H1 (cell line): ENCODE measurements at regions of chr13 and their contacts with region 1.

Region 1: GRCh38 chr13:40777166-40777808 is 6.3 kb upstream of the MRPS31 start:
- DNase-seq: no peak
- H3K4me3 ChIP-seq: peak overlapping the region in 3 of 4 experiments; percentile 7 to 55 (median 13); a peak in 4 of 8 replicates
- H3K27ac ChIP-seq: no peak overlapping the region
- H3K4me1 ChIP-seq: no peaks in the 10 kb centered on the region; a peak in 1 of 7 replicates
- H3K27me3 ChIP-seq: no peaks in the 10 kb centered on the region
- CTCF ChIP-seq: peak; percentile 21 to 66 (median 49)
- EP300 ChIP-seq: no peak
- POLR2A ChIP-seq: no peak
- RAD21 ChIP-seq: peak; percentile 76 to 77

Region 2: DNA sequence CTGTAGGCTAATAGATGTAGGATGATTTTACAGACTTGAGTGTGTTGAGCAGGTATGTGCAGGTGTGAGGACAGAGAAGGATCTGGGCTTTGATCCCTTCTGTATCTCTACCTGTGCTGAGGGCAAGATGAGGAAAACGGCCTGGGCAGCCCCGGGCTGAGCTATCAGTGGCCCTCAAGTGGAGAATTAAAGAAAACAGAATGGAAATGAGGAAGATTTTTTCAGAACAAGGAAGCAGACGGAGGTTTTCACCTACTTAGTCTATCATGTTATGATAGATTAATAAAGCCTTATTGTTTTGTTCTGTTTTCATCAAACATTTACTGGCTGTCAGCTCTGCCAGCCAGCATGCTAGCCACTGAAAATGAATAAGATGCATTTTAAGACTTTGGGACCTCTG is 88.5 kb before region 1 on chr13:
- CTCF ChIA-PET with region 1: interaction called, 10 read pairs
- POLR2A ChIA-PET with region 1: no interaction called
- DNase-seq: no peak
- H3K4me3 ChIP-seq: no peak overlapping the region
- H3K27ac ChIP-seq: no peak overlapping the region
- H3K4me1 ChIP-seq: no peaks in the 10 kb centered on the region
- H3K27me3 ChIP-seq: no peaks in the 10 kb centered on the region
- CTCF ChIP-seq: no peak
- EP300 ChIP-seq: no peak
- POLR2A ChIP-seq: no peak
- RAD21 ChIP-seq: no peak

Region 3: GRCh38 chr13:40697711-40698110 is 79.6 kb before region 1 on chr13:
- CTCF ChIA-PET with region 1: interaction called, 13 read pairs
- POLR2A ChIA-PET with region 1: no interaction called
- DNase-seq: no peak
- H3K4me3 ChIP-seq: no peak overlapping the region
- H3K27ac ChIP-seq: no peak overlapping the region
- H3K4me1 ChIP-seq: no peaks in the 10 kb centered on the region
- H3K27me3 ChIP-seq: no peaks in the 10 kb centered on the region; a peak in 2 of 7 replicates
- CTCF ChIP-seq: no peak
- EP300 ChIP-seq: no peak
- POLR2A ChIP-seq: no peak
- RAD21 ChIP-seq: no peak

Region 4: DNA sequence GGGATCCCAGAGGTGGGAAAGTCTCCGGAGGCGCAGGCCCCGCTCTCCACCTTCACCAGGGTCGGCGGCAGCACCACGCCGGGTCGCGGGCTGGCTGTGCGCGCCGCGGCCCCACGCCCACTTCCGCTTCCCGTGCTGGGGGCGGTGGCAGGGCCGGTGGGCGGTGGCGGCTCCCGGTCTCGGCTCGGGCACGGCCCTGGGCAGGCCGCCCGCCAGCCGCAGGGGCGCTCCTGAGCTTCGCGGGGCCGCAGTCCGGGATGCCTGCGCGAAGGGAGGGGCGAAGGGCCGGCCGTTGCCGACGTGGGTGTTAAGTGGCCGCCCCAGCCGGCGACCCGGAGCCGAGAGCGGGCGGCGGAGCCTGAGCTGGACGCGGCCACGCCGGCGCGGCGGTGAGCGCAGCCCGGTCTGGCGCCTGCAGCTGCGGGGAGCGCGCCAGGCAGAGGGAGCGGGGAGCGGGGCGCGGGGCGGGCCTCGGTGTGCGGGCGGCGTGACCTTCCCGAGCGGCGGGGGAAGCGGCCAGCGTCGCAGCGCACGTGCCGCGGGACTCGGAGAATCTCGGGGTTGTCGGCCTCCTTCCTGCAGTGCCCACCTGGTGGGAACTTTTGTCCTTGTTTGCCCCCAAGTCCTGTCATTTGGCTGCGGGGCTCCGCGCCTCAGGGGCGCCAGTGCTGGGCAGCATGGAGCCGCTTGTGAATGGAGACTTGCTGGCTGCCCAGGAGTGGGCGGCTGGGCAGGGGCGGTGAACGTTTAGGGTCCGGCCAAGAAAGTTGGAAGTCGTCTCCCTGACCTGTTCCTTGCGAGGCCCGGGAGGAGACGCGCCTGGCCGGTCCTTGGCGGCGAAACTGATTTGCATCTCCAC is 12.2 kb after region 1 on chr13 and contains the start of gene SLC25A15:
- CTCF ChIA-PET with region 1: interaction called, 38 read pairs
- POLR2A ChIA-PET with region 1: interaction called, 10 read pairs
- DNase-seq: peak in 1 of 2 experiments; percentile 81
- H3K4me3 ChIP-seq: peak within 1 kb of the TSS; percentile 64 to 74 (median 68)
- H3K27ac ChIP-seq: peak within 1 kb of the TSS; percentile 60; the same call in 1 of the 2 replicates
- H3K4me1 ChIP-seq: peaks cover 0 to 4% (median under 1%) of the 10 kb centered on the region in 4 experiments; a peak in 1 of 7 replicates
- H3K27me3 ChIP-seq: no peaks in the 10 kb centered on the region
- CTCF ChIP-seq: peak in 2 of 3 experiments; percentile 31 to 33; a peak in 3 of 4 replicates
- EP300 ChIP-seq: no peak
- POLR2A ChIP-seq: peak in 1 of 2 experiments; percentile 66; a peak in 2 of 3 replicates
- RAD21 ChIP-seq: peak in 1 of 2 experiments; percentile 30; a peak in 1 of 4 replicates
- total RNA-seq, gene SLC25A15: 22.1 and 23.4 TPM in 2 replicates

Region 5: DNA sequence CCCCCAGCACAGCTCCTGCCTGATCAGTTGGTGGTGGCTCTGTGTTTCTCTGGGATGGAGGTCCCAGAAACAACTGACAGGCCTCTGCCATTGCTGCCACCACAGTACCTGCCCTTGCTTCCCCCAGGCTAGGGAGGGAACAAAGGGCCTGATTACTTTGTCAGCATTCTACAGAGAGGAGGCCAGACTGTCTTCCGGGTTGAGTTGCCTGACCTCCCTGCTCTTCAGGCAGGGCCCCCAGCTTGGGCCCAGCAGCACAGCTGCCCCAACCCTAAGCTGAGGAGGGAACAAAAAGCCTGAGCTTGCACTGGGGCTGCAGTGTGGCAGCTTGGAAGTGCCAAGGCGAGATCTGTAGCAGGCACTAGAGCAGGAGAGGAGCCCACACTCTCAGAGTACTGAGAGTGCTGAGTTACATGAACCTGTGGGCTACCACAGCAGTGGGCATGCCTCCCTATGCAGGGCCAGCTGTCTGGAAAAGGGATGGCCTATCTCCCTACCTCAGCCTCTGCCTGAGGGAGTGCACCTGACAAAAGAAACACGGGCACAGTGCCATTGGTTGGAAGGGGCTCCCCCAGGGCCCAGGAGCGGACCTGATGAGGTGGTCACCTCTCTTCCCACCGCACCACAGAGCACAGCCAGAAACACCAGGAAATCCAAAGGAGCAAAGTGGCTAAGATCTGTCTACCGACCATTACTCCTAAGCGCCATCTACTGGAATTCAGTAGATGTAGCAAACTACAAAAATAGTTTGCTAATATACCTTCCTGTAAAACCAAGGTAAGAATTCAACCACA is 36.6 kb after region 1 on chr13:
- CTCF ChIA-PET with region 1: interaction called, 37 read pairs
- POLR2A ChIA-PET with region 1: no interaction called
- DNase-seq: peak in 1 of 2 experiments; percentile 57
- H3K4me3 ChIP-seq: no peak overlapping the region
- H3K27ac ChIP-seq: no peak overlapping the region
- H3K4me1 ChIP-seq: no peaks in the 10 kb centered on the region
- H3K27me3 ChIP-seq: no peaks in the 10 kb centered on the region
- CTCF ChIP-seq: peak in 2 of 3 experiments; percentile 66 to 74; a peak in 3 of 4 replicates
- EP300 ChIP-seq: no peak
- POLR2A ChIP-seq: no peak
- RAD21 ChIP-seq: peak; percentile 53 to 71

Region 6: DNA sequence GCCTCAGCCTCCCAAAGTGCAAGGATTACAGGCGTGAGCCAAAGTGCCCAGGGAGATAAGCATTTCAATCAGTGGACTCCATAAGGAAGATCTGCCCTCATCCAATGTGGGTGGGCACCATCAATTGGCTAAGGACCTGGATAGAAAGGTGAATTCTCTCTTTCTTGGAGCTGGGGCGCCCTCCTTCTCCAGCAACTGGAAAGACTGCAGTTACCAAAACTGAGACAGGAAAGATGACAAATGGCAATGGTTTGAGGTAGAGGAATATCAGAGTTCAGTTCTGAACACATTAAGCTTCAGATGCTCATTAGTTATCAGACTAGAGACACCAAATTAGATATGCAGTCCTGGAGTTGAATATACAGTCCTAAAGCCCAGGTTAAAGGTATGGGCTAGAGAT is 252.3 kb after region 1 on chr13:
- CTCF ChIA-PET with region 1: interaction called, 10 read pairs
- POLR2A ChIA-PET with region 1: no interaction called
- DNase-seq: no peak
- H3K4me3 ChIP-seq: no peak overlapping the region
- H3K27ac ChIP-seq: no peak overlapping the region
- H3K4me1 ChIP-seq: no peaks in the 10 kb centered on the region
- H3K27me3 ChIP-seq: no peaks in the 10 kb centered on the region
- CTCF ChIP-seq: peak; percentile 13 to 71 (median 69)
- EP300 ChIP-seq: no peak
- POLR2A ChIP-seq: no peak
- RAD21 ChIP-seq: peak; percentile 86 to 90